ENCODE measurements at regions of chr7 and their contacts with region 1.

Region 1: DNA sequence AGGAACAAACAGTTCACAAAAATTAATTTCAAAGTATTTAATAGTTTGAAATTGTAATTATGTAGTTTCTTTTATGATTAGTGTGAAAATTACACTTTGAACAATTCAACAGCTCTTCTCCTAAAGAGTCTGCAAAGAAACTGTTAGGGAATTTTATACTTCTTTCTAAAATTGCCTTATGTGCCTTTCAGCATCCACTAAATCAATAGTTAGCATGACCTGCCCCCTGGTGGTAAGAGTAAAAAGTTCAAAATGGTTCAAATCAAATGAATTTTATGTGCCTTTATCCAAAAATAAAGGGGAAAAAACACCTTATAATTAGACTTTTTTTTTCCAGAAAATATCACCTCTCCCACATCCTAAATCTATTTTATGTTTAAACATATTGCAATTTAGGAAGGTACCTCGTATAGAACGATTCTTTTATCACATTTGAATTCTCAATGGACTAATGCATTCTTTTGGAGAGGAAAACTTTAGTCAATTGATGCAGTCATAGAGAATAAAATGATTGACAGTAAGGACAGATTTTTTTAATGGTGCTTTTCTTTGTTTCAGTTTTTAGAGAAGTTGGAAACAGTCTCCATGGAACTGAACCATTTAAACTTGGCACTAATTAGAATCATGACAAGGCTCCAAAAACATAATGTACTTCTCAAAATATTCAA is 163.7 kb downstream of the SEMA3D start:
- DNase-seq: peak; percentile 66 to 67
- H3K4me3 ChIP-seq: no peak overlapping the region
- H3K4me1 ChIP-seq: peaks cover 15% of the 10 kb centered on the region
- H3K27me3 ChIP-seq: no peaks in the 10 kb centered on the region

Region 2: GRCh38 chr7:83976295-83976694 is 1046.9 kb before region 1 on chr7:
- in situ Hi-C with region 1: loop called (anchors 10 kb)
- DNase-seq: peak; percentile 24 to 39
- H3K4me3 ChIP-seq: no peak overlapping the region
- H3K4me1 ChIP-seq: no peaks in the 10 kb centered on the region
- H3K27me3 ChIP-seq: no peaks in the 10 kb centered on the region; the same call in 1 of the 2 replicates

Region 3: GRCh38 chr7:84783141-84783778 is 239.9 kb before region 1 on chr7:
- in situ Hi-C with region 1: loop called (anchors 25 kb)
- DNase-seq: peak; percentile 77 to 100
- H3K4me3 ChIP-seq: no peak overlapping the region
- H3K4me1 ChIP-seq: peaks cover 16% of the 10 kb centered on the region
- H3K27me3 ChIP-seq: no peaks in the 10 kb centered on the region; the same call in 1 of the 2 replicates

Region 4: GRCh38 chr7:85535974-85536729 is 513.0 kb after region 1 on chr7:
- in situ Hi-C with region 1: no loop called
- DNase-seq: no peak
- H3K4me3 ChIP-seq: no peak overlapping the region
- H3K4me1 ChIP-seq: no peaks in the 10 kb centered on the region
- H3K27me3 ChIP-seq: peaks cover 12% of the 10 kb centered on the region

Measured in HAP-1 (cell line).